ENCODE measurements at regions of chr2 and their contacts with region 1.

Region 1: DNA sequence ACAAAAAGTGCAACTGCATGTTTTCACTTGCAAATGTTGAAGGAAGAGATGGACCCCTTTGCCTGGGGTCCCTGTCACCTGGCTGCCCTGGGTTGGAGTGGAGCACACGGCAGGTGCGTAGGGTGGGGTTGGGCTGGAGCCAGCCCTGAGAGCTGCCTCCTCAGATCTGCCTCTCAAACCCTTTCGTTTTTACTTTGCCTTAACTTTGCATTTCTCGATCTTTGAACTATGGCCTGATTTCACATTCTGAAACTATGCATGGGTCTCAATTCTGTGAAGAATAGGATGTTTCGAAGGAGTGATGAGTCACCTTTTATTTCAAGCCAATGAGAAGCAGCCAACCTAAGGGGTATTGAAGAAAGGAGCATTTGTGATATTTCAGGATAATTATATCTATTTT is 132.8 kb downstream of the ACOXL start:
- DNase-seq: no peak
- H3K4me3 Mint-ChIP-seq: peak overlapping the region; percentile 48
- H3K27ac Mint-ChIP-seq: peak overlapping the region; percentile 32
- H3K4me1 Mint-ChIP-seq: peaks cover 76% of the 10 kb centered on the region
- H3K27me3 Mint-ChIP-seq: peaks cover 19% of the 10 kb centered on the region

Region 2: GRCh38 chr2:110677530-110678456 is 187.4 kb before region 1 on chr2 and contains the start of gene BUB1:
- intact Hi-C with region 1: loop called (anchors 5 kb)
- DNase-seq: peak; percentile 96
- H3K4me3 Mint-ChIP-seq: peak within 1 kb of the TSS; percentile 84
- H3K27ac Mint-ChIP-seq: peak within 1 kb of the TSS; percentile 88
- H3K4me1 Mint-ChIP-seq: peaks cover 57% of the 10 kb centered on the region
- H3K27me3 Mint-ChIP-seq: peaks cover 5% of the 10 kb centered on the region
- total RNA-seq, gene BUB1: 56.1 and 61.9 TPM in 2 replicates

Region 3: DNA sequence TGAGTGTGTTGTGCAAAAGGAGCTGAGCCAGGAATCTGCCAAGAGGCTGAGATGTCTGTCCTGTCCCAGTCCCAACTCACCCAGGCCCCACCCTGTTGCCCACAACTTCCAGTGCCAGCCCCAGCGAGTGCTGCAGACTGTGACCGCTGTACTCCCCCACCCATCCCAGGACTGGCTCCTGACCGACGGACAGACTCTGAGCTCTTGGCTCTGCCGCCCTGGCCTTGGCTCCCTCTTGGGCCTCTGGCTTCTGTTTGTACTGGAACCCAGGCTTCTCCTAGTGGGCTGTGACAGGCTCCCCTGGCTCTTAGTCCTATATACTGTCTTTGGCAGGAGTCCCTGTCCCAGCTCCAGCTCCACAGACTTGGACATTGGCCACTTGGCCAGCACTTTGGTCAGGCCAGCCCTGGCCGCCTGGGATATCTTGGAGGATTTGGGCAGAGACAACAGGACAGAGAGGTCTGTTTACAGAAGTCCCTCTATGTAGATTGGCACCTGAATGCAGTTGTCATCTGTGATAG is 91.7 kb before region 1 on chr2:
- intact Hi-C with region 1: no loop called
- DNase-seq: no peak
- H3K4me3 Mint-ChIP-seq: no peak overlapping the region
- H3K27ac Mint-ChIP-seq: no peak overlapping the region
- H3K4me1 Mint-ChIP-seq: no peaks in the 10 kb centered on the region
- H3K27me3 Mint-ChIP-seq: peaks cover 34% of the 10 kb centered on the region

Region 4: DNA sequence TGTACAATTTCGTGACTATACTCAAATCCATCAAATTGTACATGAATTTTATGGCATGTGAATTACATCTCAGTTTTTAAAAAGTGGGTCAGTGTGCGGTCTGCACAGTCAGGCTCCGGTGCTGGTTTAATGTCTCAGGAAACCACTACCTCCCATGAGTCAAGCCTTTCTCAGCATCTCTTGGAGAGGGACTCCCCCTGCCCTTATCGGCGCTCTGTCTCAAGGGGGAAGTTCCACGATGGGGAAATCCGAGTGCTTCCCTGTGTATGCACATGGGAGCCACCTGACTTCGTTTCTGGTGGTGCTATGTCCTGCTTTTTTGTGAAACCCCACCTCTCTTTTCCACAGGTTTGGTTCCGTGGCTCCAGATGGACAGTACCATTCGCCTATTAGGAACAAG is 60.3 kb before region 1 on chr2:
- intact Hi-C with region 1: loop called (anchors 2 kb)
- DNase-seq: peak; percentile 66
- H3K4me3 Mint-ChIP-seq: peak overlapping the region; percentile 45
- H3K27ac Mint-ChIP-seq: peak overlapping the region; percentile 46
- H3K4me1 Mint-ChIP-seq: peaks cover 25% of the 10 kb centered on the region
- H3K27me3 Mint-ChIP-seq: peaks cover 42% of the 10 kb centered on the region

Measured in activated T-helper 1 cell treated with anti-CD3 and anti-CD28 coated beads, Interleukin-12 subunit alpha, Interleukin-12 subunit beta, Interleukin-2, Interleukin-4 antibody, amounts not matched to agents 30 ng/mL and 10 ng/mL and 1 ng/mL, durations not matched to agents 14 hours and 24 hours and 36 hours (primary cell).